ENCODE measurements at regions of chr12 and their contacts with region 1.

Region 1: DNA sequence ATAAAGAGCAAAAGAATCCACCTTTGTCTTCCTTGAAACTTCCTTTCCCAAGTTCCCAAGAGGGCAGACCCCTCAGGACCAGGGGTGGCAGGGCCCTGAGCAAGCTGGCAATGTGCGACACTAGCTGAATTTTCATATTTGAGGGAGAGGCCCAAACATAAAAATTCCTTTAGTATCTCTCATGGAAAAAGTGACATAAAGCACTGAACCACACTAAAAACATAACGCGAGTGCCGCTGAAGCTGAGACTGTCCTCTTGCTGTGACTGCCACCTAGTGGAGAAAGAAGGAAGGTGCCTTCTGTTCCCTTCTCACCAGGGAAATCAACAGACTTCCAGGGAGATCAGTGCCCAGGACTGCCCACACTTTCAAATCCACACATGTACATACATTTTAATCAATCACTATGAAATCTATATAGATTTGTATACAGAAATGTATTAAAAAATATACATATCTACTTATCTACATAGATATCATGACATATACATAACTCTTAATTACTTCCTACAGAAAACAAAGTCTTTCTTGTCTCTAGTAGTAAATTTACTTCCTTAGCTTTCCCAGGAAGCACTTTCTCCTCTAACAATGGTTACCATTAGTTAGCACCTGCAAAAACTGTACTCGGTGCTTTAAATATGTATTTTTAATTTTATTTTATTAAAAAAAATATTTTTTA is 53.8 kb downstream of the SSH1 start:
- DNase-seq: peak; percentile 75
- H3K4me3 Mint-ChIP-seq: no peak overlapping the region
- H3K27ac Mint-ChIP-seq: peak overlapping the region; percentile 76
- H3K4me1 Mint-ChIP-seq: peaks cover 4% of the 10 kb centered on the region
- H3K27me3 Mint-ChIP-seq: no peaks in the 10 kb centered on the region

Region 2: GRCh38 chr12:108562348-108563135 is 241.0 kb before region 1 on chr12 and contains the start of gene ISCU:
- CTCF ChIA-PET with region 1: interaction called, 17 read pairs
- DNase-seq: peak; percentile 99
- H3K4me3 Mint-ChIP-seq: peak within 1 kb of the TSS; percentile 98
- H3K27ac Mint-ChIP-seq: peak within 1 kb of the TSS; percentile 97
- H3K4me1 Mint-ChIP-seq: peaks cover 66% of the 10 kb centered on the region
- H3K27me3 Mint-ChIP-seq: no peaks in the 10 kb centered on the region

Region 3: GRCh38 chr12:108691175-108691997 is 112.2 kb before region 1 on chr12:
- CTCF ChIA-PET with region 1: interaction called, 10 read pairs
- DNase-seq: peak; percentile 75
- H3K4me3 Mint-ChIP-seq: peak overlapping the region; percentile 29
- H3K27ac Mint-ChIP-seq: peak overlapping the region; percentile 77
- H3K4me1 Mint-ChIP-seq: peaks cover 66% of the 10 kb centered on the region
- H3K27me3 Mint-ChIP-seq: no peaks in the 10 kb centered on the region

Region 4: DNA sequence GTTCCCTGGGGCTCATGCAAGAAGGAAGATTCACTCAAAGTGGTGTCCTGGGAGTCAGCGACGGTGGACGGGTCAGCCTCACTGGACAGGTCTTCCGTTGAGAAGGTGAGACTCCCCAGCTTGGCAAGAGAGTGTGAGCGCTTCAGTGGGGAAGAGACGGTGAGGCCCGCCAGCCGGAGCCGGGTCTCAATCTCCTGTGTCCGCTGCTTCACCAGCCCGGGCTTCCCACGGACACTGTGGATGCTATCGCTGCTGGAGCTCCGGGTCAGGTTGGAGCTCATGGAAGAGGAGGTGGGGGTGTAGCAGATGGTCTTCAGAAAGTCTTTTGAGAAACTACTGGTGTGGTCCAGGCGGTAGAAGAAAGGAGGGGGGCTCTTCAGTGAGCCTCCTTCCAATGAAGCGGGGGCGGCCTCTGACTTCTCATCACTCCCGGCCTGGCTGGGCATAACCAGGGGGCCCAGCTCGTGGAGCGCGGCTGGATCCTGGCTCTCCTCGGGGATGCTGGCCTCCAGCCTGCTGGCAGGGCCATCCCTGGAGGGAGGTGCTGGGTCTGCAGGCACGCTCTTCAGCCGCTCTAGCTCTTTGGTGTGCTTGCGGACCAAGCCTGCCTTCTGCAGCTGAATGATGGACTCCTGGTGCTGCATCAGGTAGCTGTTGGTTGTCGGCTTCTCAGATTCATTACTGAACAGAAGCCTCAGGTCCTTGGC is 15.3 kb before region 1 on chr12:
- CTCF ChIA-PET with region 1: no interaction called
- DNase-seq: no peak
- H3K4me3 Mint-ChIP-seq: no peak overlapping the region
- H3K27ac Mint-ChIP-seq: no peak overlapping the region
- H3K4me1 Mint-ChIP-seq: no peaks in the 10 kb centered on the region
- H3K27me3 Mint-ChIP-seq: no peaks in the 10 kb centered on the region

Region 5: GRCh38 chr12:108826101-108826806 is 22.7 kb after region 1 on chr12:
- CTCF ChIA-PET with region 1: interaction called, 13 read pairs
- DNase-seq: no peak
- H3K4me3 Mint-ChIP-seq: no peak overlapping the region
- H3K27ac Mint-ChIP-seq: no peak overlapping the region
- H3K4me1 Mint-ChIP-seq: peaks cover 36% of the 10 kb centered on the region
- H3K27me3 Mint-ChIP-seq: no peaks in the 10 kb centered on the region

Region 6: DNA sequence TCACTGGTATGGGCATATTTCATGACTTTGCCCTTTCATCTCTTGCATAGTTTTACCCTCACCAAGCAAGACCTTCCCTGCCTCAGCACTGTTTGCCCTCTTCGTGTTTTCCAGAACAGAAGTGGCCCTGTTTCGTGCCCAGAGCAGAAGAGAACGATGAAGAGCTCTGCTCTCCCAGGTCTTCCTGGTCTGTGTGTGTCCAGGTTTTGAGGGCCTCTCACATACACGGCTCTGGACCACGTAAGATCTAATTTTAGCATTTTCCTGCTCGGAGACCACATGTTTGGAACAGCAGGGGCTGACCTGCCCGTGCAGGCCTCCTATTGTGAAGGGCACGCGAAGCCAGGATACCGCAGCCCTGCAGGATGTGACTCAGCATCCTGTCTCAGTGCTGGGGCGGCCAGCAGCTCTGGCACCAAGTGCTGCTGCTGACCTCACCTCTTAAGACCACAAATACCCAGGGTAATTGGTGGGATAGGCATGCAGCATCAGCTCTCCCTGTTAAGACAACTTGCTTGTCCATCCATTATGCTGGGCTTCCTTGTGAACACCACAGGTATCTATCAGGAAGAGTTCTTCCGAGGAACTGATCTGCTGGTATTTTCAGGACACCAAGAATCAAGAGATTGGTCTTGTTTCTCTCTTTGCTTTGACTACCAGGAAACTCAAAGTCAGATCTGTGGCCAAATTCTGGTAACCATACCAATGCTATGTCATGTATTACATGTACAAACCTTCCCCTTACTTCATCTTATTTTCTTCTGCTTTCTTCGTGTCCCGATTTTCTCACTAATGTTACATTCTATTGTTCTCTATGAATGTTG is 34.8 kb after region 1 on chr12:
- CTCF ChIA-PET with region 1: no interaction called
- DNase-seq: peak; percentile 77
- H3K4me3 Mint-ChIP-seq: peak overlapping the region; percentile 15
- H3K27ac Mint-ChIP-seq: peak overlapping the region; percentile 93
- H3K4me1 Mint-ChIP-seq: peaks cover 61% of the 10 kb centered on the region
- H3K27me3 Mint-ChIP-seq: no peaks in the 10 kb centered on the region

Measured in activated naive CD4-positive, alpha-beta T cell treated with anti-CD3 and anti-CD28 coated beads, Interleukin-2, amount 10 ng/mL, durations not matched to agents 7 days and 5 days (primary cell).